HepG2 (cell line): ENCODE measurements at regions of chr7 and their contacts with region 1.

Region 1: DNA sequence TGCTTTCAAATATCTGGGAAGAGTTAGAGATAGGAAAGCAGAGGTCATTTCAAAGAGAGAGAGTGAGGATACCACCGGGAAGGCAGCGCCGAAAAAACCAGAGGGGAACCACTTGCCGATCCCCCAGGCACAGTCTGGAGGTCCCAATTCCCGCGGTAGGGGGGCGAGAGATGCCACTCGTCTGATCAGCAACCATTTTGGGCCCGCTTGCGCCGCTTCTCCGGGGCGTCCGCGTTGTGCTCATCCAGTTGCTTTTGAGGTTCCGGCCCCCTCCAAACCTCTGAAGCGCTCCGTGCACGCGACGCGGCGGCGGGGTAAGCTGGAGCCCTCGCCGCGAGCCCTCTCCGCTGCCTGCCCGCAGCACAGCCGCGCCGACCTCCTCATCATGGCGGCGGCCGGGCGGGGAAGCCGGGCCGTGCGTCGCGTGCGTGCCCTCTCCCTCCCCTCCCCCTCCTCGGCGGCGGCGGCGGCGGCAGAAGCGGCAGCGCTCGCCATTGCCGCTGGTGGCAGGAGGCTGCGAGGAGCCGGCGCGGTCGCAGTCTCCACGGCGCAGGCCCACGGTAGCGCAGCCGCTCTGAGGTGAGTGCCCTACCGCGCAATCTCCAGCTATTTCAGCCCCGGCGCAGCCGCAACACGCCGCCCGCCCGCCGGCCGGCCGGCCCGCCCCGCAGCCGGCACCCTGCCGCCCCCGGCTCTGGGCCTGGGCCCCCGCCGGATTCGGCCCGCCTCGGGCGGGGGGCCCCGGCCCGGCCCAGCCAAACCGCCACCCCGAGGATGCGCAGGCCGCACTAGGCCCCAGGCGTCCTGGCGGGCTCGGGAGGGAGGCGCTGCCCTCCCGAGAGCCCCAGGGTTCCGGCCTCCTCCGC is at the start of gene NRF1:
- DNase-seq: peak; percentile 67
- ATAC-seq: peak; percentile 94
- H3K4me3 ChIP-seq: peak within 1 kb of the TSS; percentile 92 to 94 (median 94)
- H3K27ac ChIP-seq: peak within 1 kb of the TSS; percentile 94
- H3K4me1 ChIP-seq: peaks cover 54% of the 10 kb centered on the region
- H3K27me3 ChIP-seq: no peaks in the 10 kb centered on the region; a peak in 1 of 5 replicates
- CTCF ChIP-seq: peak; percentile 37
- EP300 ChIP-seq: no peak
- POLR2A ChIP-seq: peak; percentile 90 to 95
- RAD21 ChIP-seq: peak; percentile 63
- total RNA-seq, gene NRF1: 10.1 and 16.2 TPM in 2 replicates

Region 2: DNA sequence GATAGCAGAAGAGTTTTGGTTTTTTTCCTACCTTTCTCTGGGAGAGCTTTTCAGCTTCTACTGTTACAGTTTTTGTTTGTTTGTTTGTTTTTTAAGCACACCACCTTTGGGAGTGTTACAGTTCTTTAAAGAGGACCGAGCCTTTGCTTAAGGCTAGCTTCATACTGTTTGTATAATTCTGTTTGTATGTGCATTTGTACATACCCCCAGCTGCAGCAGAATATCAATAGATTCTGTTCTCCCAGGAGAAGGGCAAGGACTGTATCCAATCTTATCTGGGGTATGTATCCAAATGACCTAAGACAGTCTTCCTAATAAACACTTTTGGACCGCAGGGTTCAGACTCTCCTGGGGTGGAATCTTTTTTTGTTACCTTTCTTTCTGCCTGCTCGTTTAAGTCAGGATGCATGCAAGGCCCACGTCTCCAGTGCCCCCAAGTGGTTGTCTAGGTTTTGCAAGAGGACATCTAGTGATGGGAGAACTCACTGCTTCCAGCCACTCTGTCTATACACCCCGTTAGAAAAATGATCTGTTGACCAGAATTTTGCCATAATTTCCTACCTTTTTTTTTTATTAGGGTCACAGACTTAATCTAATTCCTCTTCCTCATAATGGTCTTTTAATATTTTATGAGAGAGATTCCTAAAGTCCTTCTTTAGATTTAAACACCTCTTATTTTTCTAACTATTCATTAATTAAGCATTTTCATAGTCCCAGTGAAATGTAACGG is 24.0 kb after region 1 on chr7:
- CTCF ChIA-PET with region 1: interaction called, 12 read pairs
- POLR2A ChIA-PET with region 1: interaction called, 3 read pairs
- in situ Hi-C with region 1: no loop called
- intact Hi-C with region 1: loop called (anchors 1 kb)
- DNase-seq: peak; percentile 73
- ATAC-seq: peak; percentile 99
- H3K4me3 ChIP-seq: no peak overlapping the region
- H3K27ac ChIP-seq: no peak overlapping the region
- H3K4me1 ChIP-seq: peaks cover 19% of the 10 kb centered on the region
- H3K27me3 ChIP-seq: no peaks in the 10 kb centered on the region
- CTCF ChIP-seq: peak; percentile 84
- EP300 ChIP-seq: no peak
- POLR2A ChIP-seq: no peak
- RAD21 ChIP-seq: peak; percentile 46; the same call in 1 of the 2 replicates

Region 3: GRCh38 chr7:130182990-130183389 is 571.5 kb after region 1 on chr7:
- CTCF ChIA-PET with region 1: no interaction called
- POLR2A ChIA-PET with region 1: no interaction called
- in situ Hi-C with region 1: no loop called
- intact Hi-C with region 1: no loop called
- DNase-seq: no peak
- ATAC-seq: no peak
- H3K4me3 ChIP-seq: no peak overlapping the region
- H3K27ac ChIP-seq: no peak overlapping the region
- H3K4me1 ChIP-seq: no peaks in the 10 kb centered on the region
- H3K27me3 ChIP-seq: no peaks in the 10 kb centered on the region
- CTCF ChIP-seq: no peak
- EP300 ChIP-seq: no peak
- POLR2A ChIP-seq: no peak
- RAD21 ChIP-seq: no peak